HepG2 (cell line): ENCODE measurements at regions of chr6 and their contacts with region 1.

Region 1: DNA sequence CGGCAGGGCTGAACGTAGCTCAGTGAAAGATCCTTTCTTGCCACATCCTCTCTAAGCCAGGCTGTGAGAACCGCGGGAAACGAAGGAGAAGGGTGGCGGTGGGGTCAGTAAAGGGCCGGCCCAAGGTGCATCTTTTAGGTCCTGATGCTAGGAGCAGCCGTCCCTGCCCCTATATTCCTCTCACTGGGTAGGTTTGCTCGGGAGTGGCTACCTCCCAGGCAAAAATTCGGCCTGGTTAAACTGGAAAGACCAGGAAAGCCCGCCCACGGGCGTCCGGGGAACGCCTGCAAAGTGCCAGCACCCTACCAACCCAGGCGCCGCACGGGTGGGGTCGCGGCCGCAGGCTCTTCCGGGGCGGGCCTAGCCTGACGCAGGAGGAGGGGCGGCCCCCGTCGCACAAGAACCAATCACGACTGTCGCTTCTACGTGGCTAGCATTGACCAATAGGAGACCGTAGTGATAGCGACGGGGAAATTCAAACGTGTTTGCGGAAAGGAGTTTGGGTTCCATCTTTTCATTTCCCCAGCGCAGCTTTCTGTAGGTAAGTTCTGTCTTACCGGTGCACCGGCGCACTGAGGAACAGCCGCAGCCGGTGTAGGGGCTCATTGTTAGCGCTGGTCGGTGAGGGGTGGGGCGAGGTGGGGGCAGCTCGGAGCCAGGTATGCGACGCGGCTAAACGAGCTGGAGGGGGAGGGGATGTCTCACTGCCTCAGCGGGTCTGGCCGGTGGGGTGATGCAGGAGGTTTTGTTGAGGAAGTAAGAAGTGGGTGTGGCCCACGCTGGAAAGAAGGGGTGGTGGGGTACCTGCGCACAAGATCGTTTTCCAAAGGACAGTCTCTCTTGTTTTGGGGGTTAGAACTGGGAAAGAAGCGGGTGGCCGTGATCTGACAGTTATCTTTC is at the start of gene TTK:
- DNase-seq: peak; percentile 93
- ATAC-seq: peak; percentile 99
- H3K4me3 ChIP-seq: peak within 1 kb of the TSS; percentile 80 to 96 (median 91)
- H3K27ac ChIP-seq: peak within 1 kb of the TSS; percentile 85
- H3K4me1 ChIP-seq: peaks cover 26% of the 10 kb centered on the region
- H3K27me3 ChIP-seq: no peaks in the 10 kb centered on the region; a peak in 1 of 5 replicates
- CTCF ChIP-seq: no peak
- EP300 ChIP-seq: no peak
- POLR2A ChIP-seq: peak; percentile 51 to 78; a peak in 3 of 4 replicates
- RAD21 ChIP-seq: no peak
- total RNA-seq, gene TTK: 33.2 and 53.3 TPM in 2 replicates

Region 2: DNA sequence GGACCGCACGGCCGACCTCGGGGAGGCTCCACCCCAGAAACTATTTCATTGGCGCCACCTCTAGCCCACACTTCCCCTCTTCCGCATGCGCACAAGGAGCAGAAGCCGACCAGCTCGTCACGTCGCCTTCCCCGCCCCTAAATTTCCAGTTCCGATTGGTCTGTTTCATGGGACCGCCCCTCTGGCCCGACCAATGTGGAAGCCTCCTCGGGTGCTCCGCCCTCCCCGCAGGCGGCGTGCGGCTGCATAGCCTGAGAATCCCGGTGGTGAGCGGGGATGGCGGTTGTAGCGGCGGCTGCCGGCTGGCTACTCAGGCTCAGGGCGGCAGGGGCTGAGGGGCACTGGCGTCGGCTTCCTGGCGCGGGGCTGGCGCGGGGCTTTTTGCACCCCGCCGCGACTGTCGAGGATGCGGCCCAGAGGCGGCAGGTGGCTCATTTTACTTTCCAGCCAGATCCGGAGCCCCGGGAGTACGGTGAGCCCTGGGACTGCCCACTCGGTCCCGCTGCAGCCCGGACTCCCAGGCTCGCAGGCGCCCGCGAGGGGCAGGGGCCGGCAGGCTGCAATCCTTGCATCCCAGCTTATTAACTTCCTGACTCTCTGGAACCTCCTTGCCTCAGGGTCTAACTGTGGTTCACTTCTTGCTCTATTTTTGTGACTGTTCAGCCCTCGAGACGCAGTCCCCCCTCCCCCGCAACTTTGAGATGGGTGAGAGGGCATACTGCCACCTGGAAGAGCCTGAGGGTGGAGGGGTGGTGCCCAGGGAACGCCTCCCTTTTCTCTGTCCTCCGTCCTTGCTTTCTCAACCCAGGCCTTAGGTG is 102.2 kb after region 1 on chr6 and contains the start of gene BCKDHB:
- CTCF ChIA-PET with region 1: no interaction called
- POLR2A ChIA-PET with region 1: interaction called, 5 read pairs
- in situ Hi-C with region 1: no loop called
- intact Hi-C with region 1: loop called (anchors 2 kb)
- DNase-seq: peak; percentile 98
- ATAC-seq: peak; percentile 99
- H3K4me3 ChIP-seq: peak within 1 kb of the TSS; percentile 72 to 96 (median 93)
- H3K27ac ChIP-seq: peak within 1 kb of the TSS; percentile 72
- H3K4me1 ChIP-seq: peaks cover 27% of the 10 kb centered on the region
- H3K27me3 ChIP-seq: no peaks in the 10 kb centered on the region; a peak in 1 of 5 replicates
- CTCF ChIP-seq: no peak; the same call in 1 of the 2 replicates
- EP300 ChIP-seq: no peak
- POLR2A ChIP-seq: peak; percentile 92 to 94
- RAD21 ChIP-seq: 0 out of 2 replicates have a peak, but pooled peaks have one; percentile 28
- total RNA-seq, gene BCKDHB: 13.6 and 17.0 TPM in 2 replicates